ENCODE measurements at regions of chr6 and their contacts with region 1.

Region 1: DNA sequence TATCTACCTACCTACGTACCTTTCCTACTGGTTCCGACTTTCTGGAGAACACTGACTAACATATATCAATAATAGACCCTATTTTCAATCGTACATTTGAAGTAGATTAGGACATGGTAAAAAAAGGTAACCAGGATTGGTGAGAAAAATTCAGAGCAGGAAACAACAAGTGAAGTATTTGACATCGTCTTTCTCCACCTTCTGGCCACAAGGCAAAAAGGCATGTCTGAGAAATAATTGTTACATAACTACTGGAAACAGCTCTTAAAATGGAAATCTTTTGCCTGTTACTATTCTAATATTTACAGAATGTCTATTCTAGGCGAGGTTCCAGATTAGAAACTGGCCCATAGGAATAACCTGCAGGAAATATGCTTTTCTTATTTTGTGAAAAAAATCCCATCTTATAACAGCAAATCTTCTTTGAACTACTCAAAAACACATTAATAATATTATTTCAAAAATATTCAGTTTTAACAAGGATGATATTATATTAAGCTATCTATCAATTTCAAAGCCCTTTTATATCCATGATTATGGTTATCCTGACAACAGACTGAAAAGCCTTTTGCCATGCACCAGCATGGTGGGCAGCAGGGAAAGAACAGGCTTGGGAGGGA is 80.8 kb downstream of the RCAN2 start:
- DNase-seq: peak; percentile 28 to 79 (median 39)
- H3K4me3 ChIP-seq: no peak overlapping the region
- H3K27ac ChIP-seq: no peak overlapping the region
- H3K4me1 ChIP-seq: peaks cover 0 to 22% of the 10 kb centered on the region in 2 donors
- H3K27me3 ChIP-seq: no peaks in the 10 kb centered on the region
- CTCF ChIP-seq: peak; percentile 71 to 99 (median 83)
- POLR2A ChIP-seq: no peak

Region 2: GRCh38 chr6:46090115-46091079 is 320.0 kb before region 1 on chr6:
- intact Hi-C with region 1: loop called in 1 of 2 experiments (anchors 5 kb)
- DNase-seq: peak; percentile 45 to 83 (median 61)
- H3K4me3 ChIP-seq: no peak overlapping the region
- H3K27ac ChIP-seq: no peak overlapping the region
- H3K4me1 ChIP-seq: no peaks in the 10 kb centered on the region
- H3K27me3 ChIP-seq: no peaks in the 10 kb centered on the region
- CTCF ChIP-seq: peak; percentile 58 to 86 (median 77)
- POLR2A ChIP-seq: no peak

Region 3: DNA sequence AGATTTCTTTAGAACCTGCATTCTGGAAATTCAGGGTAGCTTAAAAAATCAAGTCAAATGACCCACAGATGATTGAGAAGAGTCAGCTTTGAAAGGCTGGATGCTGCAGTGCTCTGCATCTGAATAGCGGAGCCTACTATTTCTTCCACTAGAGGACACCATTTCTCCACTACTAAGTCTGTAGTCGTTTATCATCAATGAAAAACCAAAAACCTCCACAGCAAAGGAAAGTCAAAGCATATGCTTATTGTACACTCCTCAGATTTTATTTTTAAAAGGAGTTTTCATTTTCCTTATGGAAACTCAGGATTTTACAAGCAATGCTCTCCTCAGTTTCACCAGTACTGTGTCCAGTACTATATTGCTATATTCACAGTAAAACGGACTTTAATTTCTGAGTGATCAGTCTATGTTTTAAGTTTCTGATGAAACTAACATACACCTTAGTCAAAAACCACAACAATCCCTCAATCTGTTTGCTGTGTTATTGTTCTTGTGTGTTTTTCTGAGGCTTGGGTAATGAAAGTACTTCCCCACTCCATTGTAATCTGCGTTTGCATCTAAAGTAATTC is 189.1 kb before region 1 on chr6:
- intact Hi-C with region 1: loop called (anchors 5 kb)
- DNase-seq: peak in 1 of 7 donors; percentile 13
- H3K4me3 ChIP-seq: no peak overlapping the region
- H3K27ac ChIP-seq: no peak overlapping the region
- H3K4me1 ChIP-seq: peaks cover 0 to 21% of the 10 kb centered on the region in 2 donors
- H3K27me3 ChIP-seq: no peaks in the 10 kb centered on the region
- CTCF ChIP-seq: peak; percentile 74 to 96 (median 94)
- POLR2A ChIP-seq: no peak

Region 4: GRCh38 chr6:46312654-46313053 is 97.8 kb before region 1 on chr6:
- intact Hi-C with region 1: loop called in 1 of 2 experiments (anchors 10 kb)
- DNase-seq: peak in 1 of 7 donors; percentile 34
- H3K4me3 ChIP-seq: no peak overlapping the region
- H3K27ac ChIP-seq: no peak overlapping the region
- H3K4me1 ChIP-seq: no peaks in the 10 kb centered on the region
- H3K27me3 ChIP-seq: no peaks in the 10 kb centered on the region
- CTCF ChIP-seq: no peak
- POLR2A ChIP-seq: no peak